GM12878 (cell line): ENCODE measurements at regions of chr15 and their contacts with region 1.

Region 1: DNA sequence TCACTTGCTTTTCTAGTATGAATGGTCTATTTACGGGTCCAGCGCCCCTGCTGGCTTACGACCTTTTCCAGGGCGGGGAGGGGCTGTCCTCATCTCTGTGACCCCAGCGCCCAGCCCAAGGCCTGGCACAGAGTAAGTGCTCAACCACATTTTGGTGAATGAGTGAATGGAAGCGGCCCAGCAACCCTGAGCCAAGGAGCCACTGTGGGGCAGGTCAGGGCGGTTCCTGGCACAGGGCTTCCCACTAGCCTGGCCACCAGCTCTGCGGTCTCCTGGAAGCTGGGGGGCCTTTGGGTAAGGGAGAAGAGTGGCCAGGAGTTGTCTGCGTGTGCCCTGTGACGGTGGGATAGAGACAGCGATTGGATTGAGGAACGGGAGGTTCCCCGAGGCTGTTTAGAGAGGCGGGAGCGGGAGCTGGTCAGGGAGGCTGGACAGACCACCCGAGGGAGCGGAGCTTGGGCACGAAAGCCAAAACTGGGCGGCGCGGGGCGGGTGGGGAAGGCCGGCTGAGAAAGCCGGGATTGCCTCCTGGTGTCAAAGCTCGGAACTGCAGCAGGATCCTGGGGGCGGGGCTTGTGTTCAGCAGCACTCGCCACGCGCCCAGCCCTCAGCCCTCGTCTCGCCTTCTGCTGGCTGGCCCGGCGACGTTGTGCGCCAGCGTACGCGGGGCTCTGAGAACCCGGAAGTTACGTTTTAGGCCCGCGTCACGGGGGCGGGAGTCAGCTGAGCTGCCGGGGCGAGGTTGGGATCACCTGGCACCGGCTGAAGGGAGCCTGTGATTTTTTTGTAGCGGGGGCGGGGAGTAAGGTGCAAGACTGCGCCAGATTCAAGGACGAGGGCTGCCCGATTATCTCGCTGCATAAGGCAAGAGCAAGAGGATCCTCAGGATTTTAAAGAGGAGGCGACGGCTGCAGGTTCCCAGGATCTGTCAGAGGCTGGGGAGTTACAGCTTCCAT is at the start of gene VPS18:
- DNase-seq: peak; percentile 84
- ATAC-seq: peak; percentile 94
- H3K4me3 ChIP-seq: peak within 1 kb of the TSS; percentile 96
- H3K27ac ChIP-seq: peak within 1 kb of the TSS; percentile 86
- H3K4me1 ChIP-seq: peaks cover 21% of the 10 kb centered on the region
- H3K27me3 ChIP-seq: no peaks in the 10 kb centered on the region
- CTCF ChIP-seq: peak; percentile 92 to 97 (median 96)
- EP300 ChIP-seq: no peak
- POLR2A ChIP-seq: peak; percentile 80
- RAD21 ChIP-seq: peak; percentile 85
- polyA plus RNA-seq, gene VPS18: 0.71 to 1.7 TPM

Region 2: GRCh38 chr15:40694688-40695468 is 199.1 kb before region 1 on chr15 and contains the start of gene RAD51:
- CTCF ChIA-PET with region 1: interaction called, 11 read pairs
- POLR2A ChIA-PET with region 1: no interaction called
- RAD21 ChIA-PET with region 1: interaction called, 8 read pairs
- SMC1A ChIA-PET with region 1: interaction called, 4 read pairs
- in situ Hi-C with region 1: no loop called
- intact Hi-C with region 1: loop called (anchors 5 kb)
- DNase-seq: peak; percentile 84
- ATAC-seq: peak; percentile 95
- H3K4me3 ChIP-seq: peak within 1 kb of the TSS; percentile 96
- H3K27ac ChIP-seq: peak within 1 kb of the TSS; percentile 86
- H3K4me1 ChIP-seq: peaks cover 2% of the 10 kb centered on the region
- H3K27me3 ChIP-seq: no peaks in the 10 kb centered on the region
- CTCF ChIP-seq: no peak
- EP300 ChIP-seq: 0 out of 4 replicates have a peak, but pooled peaks of 1 of the 2 experiments have one; percentile 40
- POLR2A ChIP-seq: peak; percentile 82
- RAD21 ChIP-seq: no peak
- polyA plus RNA-seq, gene RAD51: 13.1 to 23.6 TPM

Region 3: DNA sequence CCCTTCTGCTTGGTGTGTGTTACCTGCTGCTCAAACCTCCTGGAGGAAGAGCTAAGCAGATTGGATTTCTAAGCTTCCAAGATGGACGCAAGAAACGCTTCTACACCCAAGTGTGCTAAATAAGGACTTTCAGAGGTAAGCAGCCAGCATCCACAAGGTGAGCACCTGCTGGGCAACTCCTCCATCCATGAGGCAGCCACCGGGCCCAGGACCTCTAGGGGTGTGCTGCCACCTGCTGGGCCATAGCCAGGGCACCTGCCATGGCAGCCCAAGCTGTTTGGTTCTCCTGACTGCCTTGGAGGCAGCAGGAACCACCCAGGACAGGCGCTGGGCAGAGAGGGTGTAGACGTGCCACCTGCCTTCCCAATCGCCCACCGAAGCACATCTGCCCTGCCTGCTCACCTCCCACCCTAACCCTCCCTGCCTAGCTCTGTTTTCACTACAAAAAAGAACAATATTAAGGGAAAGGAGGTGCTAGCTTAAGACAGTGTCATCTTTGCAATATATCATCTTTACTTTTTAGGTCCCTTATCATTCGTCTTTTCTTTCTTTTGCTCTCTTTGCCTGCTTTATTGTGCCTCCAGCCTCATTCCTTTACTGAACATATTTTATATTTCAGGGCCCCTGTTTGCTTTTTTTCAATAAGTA is 111.3 kb before region 1 on chr15:
- CTCF ChIA-PET with region 1: interaction called, 18 read pairs
- POLR2A ChIA-PET with region 1: no interaction called
- RAD21 ChIA-PET with region 1: interaction called, 12 read pairs
- SMC1A ChIA-PET with region 1: interaction called, 27 read pairs
- in situ Hi-C with region 1: no loop called
- intact Hi-C with region 1: no loop called
- DNase-seq: no peak
- ATAC-seq: peak; percentile 100
- H3K4me3 ChIP-seq: no peak overlapping the region
- H3K27ac ChIP-seq: no peak overlapping the region
- H3K4me1 ChIP-seq: peaks cover 5% of the 10 kb centered on the region
- H3K27me3 ChIP-seq: no peaks in the 10 kb centered on the region
- CTCF ChIP-seq: peak; percentile 89 to 98 (median 97)
- EP300 ChIP-seq: no peak
- POLR2A ChIP-seq: no peak
- RAD21 ChIP-seq: peak; percentile 88

Region 4: DNA sequence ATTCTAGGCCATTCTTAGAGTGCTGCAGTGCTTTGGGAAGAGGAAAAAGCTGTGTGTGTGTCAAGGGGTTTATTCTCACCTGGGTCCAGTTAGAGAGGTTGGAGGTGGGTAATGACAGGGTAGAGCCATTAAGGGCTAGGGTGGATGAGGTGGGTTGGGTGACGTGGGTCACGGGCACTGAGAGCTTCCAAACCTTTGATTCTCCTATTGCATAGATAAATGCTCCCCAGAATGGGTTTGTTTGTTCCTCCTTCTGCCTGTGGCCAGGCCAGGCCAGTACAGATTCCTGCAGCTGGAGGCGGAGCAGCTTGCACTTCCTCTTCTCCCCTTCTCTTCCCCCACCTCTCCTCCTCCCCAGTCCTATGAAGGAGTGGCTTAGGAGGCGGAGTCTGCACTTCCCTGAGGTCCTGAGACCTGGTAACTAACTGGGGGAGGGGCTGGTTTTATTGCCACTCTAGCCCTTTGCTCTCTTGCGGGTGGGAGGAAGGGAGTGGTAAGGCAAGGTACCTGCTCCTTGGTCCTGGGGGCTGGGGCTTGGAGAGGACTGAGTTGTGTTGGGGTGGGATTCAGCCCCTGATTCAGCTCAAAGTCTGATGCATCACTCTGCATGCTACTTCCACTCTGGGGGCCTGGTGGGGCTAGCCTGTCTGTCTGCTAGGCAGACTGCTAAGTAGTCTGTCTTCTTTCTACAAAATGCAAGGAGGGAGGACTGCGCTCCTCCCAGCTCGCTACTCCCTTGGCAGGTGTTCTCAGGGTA is 46.6 kb before region 1 on chr15:
- CTCF ChIA-PET with region 1: interaction called, 37 read pairs
- POLR2A ChIA-PET with region 1: interaction called, 9 read pairs
- RAD21 ChIA-PET with region 1: interaction called, 20 read pairs
- SMC1A ChIA-PET with region 1: interaction called, 32 read pairs
- in situ Hi-C with region 1: no loop called
- intact Hi-C with region 1: no loop called
- DNase-seq: peak; percentile 57
- ATAC-seq: peak; percentile 82
- H3K4me3 ChIP-seq: peak overlapping the region; percentile 45; the same call in 1 of the 2 replicates
- H3K27ac ChIP-seq: peak overlapping the region; percentile 76
- H3K4me1 ChIP-seq: peaks cover 26% of the 10 kb centered on the region
- H3K27me3 ChIP-seq: peaks cover 1 to 3% of the 10 kb centered on the region in 2 experiments; a peak in 1 of 4 replicates
- CTCF ChIP-seq: no peak
- EP300 ChIP-seq: no peak
- POLR2A ChIP-seq: no peak
- RAD21 ChIP-seq: no peak

Region 5: GRCh38 chr15:40857601-40858341 is 36.2 kb before region 1 on chr15:
- CTCF ChIA-PET with region 1: interaction called, 32 read pairs
- POLR2A ChIA-PET with region 1: no interaction called
- RAD21 ChIA-PET with region 1: interaction called, 7 read pairs
- SMC1A ChIA-PET with region 1: interaction called, 144 read pairs
- in situ Hi-C with region 1: loop called (anchors 5 kb)
- intact Hi-C with region 1: loop called (anchors 1 kb)
- DNase-seq: no peak
- ATAC-seq: peak; percentile 89
- H3K4me3 ChIP-seq: no peak overlapping the region
- H3K27ac ChIP-seq: no peak overlapping the region
- H3K4me1 ChIP-seq: peaks cover 4% of the 10 kb centered on the region
- H3K27me3 ChIP-seq: no peaks in the 10 kb centered on the region
- CTCF ChIP-seq: peak; percentile 95 to 99 (median 98)
- EP300 ChIP-seq: no peak
- POLR2A ChIP-seq: no peak
- RAD21 ChIP-seq: peak; percentile 95

Region 6: GRCh38 chr15:40881351-40881750 is 12.7 kb before region 1 on chr15:
- CTCF ChIA-PET with region 1: interaction called, 20 read pairs
- POLR2A ChIA-PET with region 1: interaction called, 220 read pairs
- RAD21 ChIA-PET with region 1: interaction called, 551 read pairs
- SMC1A ChIA-PET with region 1: interaction called, 454 read pairs
- in situ Hi-C with region 1: no loop called
- intact Hi-C with region 1: no loop called
- DNase-seq: no peak
- ATAC-seq: no peak
- H3K4me3 ChIP-seq: no peak overlapping the region
- H3K27ac ChIP-seq: no peak overlapping the region
- H3K4me1 ChIP-seq: peaks cover 23% of the 10 kb centered on the region
- H3K27me3 ChIP-seq: no peaks in the 10 kb centered on the region
- CTCF ChIP-seq: no peak
- EP300 ChIP-seq: no peak
- POLR2A ChIP-seq: no peak
- RAD21 ChIP-seq: no peak

Region 7: DNA sequence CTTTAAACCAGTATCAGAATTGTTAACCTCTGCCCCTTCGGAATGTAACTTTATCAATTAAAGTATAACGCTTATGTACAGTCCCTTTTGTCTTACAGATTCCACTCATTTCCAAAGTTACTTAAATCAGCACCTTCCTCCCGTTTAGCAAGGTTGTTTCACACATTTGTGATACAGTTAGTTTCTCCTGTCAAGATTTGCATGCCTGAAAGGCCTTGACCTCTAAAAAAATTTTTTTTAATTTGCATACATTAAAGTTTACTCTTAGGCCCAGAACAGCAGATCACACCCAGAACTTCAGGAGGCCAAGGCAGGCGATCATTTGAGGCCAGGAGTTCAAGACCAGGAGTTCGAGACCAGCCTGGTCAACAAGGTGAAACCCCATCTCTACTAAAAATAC is 212.9 kb after region 1 on chr15:
- CTCF ChIA-PET with region 1: no interaction called
- POLR2A ChIA-PET with region 1: no interaction called
- RAD21 ChIA-PET with region 1: no interaction called
- SMC1A ChIA-PET with region 1: no interaction called
- in situ Hi-C with region 1: no loop called
- intact Hi-C with region 1: no loop called
- DNase-seq: no peak
- ATAC-seq: peak; percentile 65
- H3K4me3 ChIP-seq: no peak overlapping the region
- H3K27ac ChIP-seq: no peak overlapping the region
- H3K4me1 ChIP-seq: no peaks in the 10 kb centered on the region
- H3K27me3 ChIP-seq: no peaks in the 10 kb centered on the region
- CTCF ChIP-seq: no peak
- EP300 ChIP-seq: no peak
- POLR2A ChIP-seq: no peak
- RAD21 ChIP-seq: no peak

Region 8: DNA sequence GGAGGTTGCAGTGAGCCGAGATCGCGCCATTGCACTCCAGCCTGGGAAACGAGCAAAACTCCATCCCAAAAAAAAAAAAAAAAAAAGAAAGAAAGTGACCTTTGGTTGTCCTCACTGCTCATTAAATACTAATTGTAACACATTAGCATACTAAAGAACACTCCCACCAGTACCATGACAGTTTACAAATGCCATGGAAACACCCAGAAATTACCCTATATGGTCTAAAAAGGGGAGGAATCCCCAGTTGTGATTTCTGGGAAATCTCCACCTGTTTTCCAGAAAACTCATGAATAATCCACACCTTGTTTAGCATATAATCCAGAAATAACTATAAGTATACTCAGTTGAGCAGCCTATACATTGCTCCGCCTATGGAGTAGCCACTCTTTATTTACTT is 245.6 kb after region 1 on chr15:
- CTCF ChIA-PET with region 1: no interaction called
- POLR2A ChIA-PET with region 1: no interaction called
- RAD21 ChIA-PET with region 1: no interaction called
- SMC1A ChIA-PET with region 1: no interaction called
- in situ Hi-C with region 1: no loop called
- intact Hi-C with region 1: no loop called
- DNase-seq: no peak
- ATAC-seq: no peak
- H3K4me3 ChIP-seq: no peak overlapping the region
- H3K27ac ChIP-seq: no peak overlapping the region
- H3K4me1 ChIP-seq: no peaks in the 10 kb centered on the region
- H3K27me3 ChIP-seq: no peaks in the 10 kb centered on the region
- CTCF ChIP-seq: no peak
- EP300 ChIP-seq: no peak
- POLR2A ChIP-seq: no peak
- RAD21 ChIP-seq: no peak

Region 9: GRCh38 chr15:41832875-41833274 is 938.9 kb after region 1 on chr15:
- CTCF ChIA-PET with region 1: no interaction called
- POLR2A ChIA-PET with region 1: no interaction called
- RAD21 ChIA-PET with region 1: no interaction called
- SMC1A ChIA-PET with region 1: no interaction called
- in situ Hi-C with region 1: no loop called
- intact Hi-C with region 1: no loop called
- DNase-seq: no peak
- ATAC-seq: no peak; the same call in 2 of the 3 replicates
- H3K4me3 ChIP-seq: no peak overlapping the region
- H3K27ac ChIP-seq: no peak overlapping the region
- H3K4me1 ChIP-seq: no peaks in the 10 kb centered on the region
- H3K27me3 ChIP-seq: no peaks in the 10 kb centered on the region
- CTCF ChIP-seq: no peak
- EP300 ChIP-seq: no peak
- POLR2A ChIP-seq: no peak
- RAD21 ChIP-seq: no peak